B cell (primary cell): ENCODE measurements at regions of chr16 and their contacts with region 1.

Region 1: GRCh38 chr16:29961479-29962343 is at the start of gene TMEM219:
- DNase-seq: peak; percentile 97
- ATAC-seq: peak; percentile 92
- H3K4me3 ChIP-seq: peak within 1 kb of the TSS; percentile 76 to 86 (median 84)
- H3K4me3 Mint-ChIP-seq: peak within 1 kb of the TSS; percentile 90
- H3K27ac ChIP-seq: peak within 1 kb of the TSS; percentile 79 to 88
- H3K27ac Mint-ChIP-seq: peak within 1 kb of the TSS; percentile 91
- H3K4me1 ChIP-seq: peaks cover 13 to 19% of the 10 kb centered on the region in 2 donors
- H3K4me1 Mint-ChIP-seq: peaks cover 20% of the 10 kb centered on the region
- H3K27me3 ChIP-seq: no peaks in the 10 kb centered on the region
- H3K27me3 Mint-ChIP-seq: no peaks in the 10 kb centered on the region
- CTCF ChIP-seq: peak; percentile 65
- total RNA-seq, gene TMEM219: 56.3 and 66.6 TPM in 2 replicates

Region 2: DNA sequence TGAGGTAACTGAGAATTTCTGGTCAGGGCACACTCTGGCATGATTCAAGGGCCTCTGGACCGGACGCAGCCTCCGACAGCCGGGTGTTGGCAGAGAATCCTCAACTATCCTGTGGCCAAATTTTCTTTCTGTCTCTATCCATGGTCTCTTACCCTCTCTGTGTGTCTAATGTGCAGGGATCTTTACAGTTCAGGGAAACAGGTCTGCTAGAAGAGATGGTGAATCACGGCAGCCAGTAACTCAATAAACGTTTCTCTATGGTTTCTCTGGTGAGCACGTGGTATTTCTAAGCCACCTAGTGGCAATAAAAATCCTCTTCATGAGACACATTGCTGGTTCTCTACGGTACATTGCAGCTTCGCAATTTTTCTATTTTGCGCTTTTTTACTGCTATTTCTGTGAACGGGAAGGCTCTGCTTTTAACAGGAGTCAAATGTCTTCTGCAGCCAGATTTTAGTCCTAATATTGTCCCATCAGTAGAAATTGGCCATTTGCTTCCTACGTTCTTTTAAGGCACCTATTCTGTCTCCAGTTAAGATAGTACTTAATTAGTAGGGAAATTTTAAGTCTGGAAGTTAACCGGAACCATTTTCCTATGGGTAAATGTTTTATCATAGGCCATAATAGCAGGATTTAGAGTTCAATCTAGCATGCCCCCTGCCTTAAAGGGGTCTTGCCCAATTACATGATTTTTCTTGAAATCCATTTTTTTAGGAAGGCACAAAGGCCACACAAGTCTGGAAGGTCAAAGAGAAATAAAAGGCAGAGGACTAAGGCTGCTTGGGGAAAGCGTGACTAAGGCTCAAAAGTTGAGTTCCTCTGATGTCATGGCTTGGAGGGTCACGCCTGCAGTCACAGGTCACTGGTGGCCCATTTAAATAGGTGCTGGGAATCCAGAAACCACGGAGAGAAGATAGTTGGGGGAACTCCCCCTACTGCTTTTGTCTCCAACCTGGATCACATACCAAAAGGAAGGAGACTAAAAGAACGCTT is 251.2 kb before region 1 on chr16:
- CTCF ChIA-PET with region 1: no interaction called
- POLR2A ChIA-PET with region 1: no interaction called
- intact Hi-C with region 1: no loop called
- DNase-seq: peak; percentile 77
- ATAC-seq: peak; percentile 88
- H3K4me3 ChIP-seq: peak overlapping the region in 1 of 5 experiments; percentile 29
- H3K4me3 Mint-ChIP-seq: peak overlapping the region; percentile 17
- H3K27ac ChIP-seq: no peak overlapping the region
- H3K27ac Mint-ChIP-seq: no peak overlapping the region
- H3K4me1 ChIP-seq: peaks cover 19 to 21% of the 10 kb centered on the region in 2 donors
- H3K4me1 Mint-ChIP-seq: peaks cover 20% of the 10 kb centered on the region
- H3K27me3 ChIP-seq: no peaks in the 10 kb centered on the region
- H3K27me3 Mint-ChIP-seq: peaks cover 8% of the 10 kb centered on the region
- CTCF ChIP-seq: peak; percentile 76

Region 3: DNA sequence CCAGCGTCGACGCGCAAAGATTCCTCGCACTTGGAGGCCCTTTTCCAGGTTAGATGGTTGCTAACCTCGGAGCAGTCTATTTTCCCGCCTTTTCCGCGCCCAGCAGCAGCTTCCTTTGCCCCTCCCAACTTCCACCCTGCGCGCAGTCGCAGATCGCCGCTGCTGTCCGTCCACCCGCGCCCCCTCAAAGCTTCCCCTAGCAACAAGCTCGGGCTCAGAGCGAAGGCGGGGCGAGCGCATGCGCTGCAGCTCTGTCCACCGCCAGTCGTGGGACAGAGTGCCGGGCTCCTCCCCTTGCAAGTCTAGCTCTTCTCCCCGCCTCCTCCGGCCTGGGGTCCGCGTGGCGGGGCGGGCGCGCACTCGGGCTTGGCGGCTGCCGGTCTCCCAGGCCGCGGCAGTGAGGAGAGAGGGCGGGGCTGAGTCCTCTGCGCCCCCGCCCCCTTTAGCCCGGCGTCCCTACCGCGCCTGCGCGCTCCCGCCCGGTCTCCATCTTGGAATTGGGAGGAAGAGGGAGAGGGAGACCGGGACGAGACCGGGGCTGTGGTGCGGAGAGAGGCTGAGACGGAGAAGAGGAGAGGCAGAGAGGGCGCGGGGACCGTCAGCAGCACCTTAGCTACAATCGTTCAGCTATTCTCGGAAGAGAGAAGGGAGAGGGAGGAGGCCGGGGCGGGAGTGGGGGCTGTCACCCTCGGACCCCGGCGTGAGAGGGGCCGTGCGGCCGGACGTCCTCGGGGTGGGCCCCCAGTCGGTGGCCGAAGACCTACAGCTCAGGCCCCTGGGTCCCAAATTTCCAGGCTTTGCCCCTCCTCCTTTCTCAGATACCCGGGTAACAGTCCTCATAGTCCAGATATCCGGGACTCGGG is 11.9 kb after region 1 on chr16 and contains the start of gene TAOK2:
- CTCF ChIA-PET with region 1: interaction called, 14 read pairs
- POLR2A ChIA-PET with region 1: interaction called, 16 read pairs
- intact Hi-C with region 1: loop called (anchors 1 kb)
- DNase-seq: peak; percentile 98
- ATAC-seq: peak; percentile 99
- H3K4me3 ChIP-seq: peak within 1 kb of the TSS; percentile 79 to 100 (median 99)
- H3K4me3 Mint-ChIP-seq: peak within 1 kb of the TSS; percentile 95
- H3K27ac ChIP-seq: peak within 1 kb of the TSS; percentile 73 to 79
- H3K27ac Mint-ChIP-seq: peak within 1 kb of the TSS; percentile 94
- H3K4me1 ChIP-seq: peaks cover 31 to 38% of the 10 kb centered on the region in 2 donors
- H3K4me1 Mint-ChIP-seq: peaks cover 36% of the 10 kb centered on the region
- H3K27me3 ChIP-seq: no peaks in the 10 kb centered on the region
- H3K27me3 Mint-ChIP-seq: no peaks in the 10 kb centered on the region
- CTCF ChIP-seq: no peak
- total RNA-seq, gene TAOK2: 50.8 and 51.9 TPM in 2 replicates

Region 4: DNA sequence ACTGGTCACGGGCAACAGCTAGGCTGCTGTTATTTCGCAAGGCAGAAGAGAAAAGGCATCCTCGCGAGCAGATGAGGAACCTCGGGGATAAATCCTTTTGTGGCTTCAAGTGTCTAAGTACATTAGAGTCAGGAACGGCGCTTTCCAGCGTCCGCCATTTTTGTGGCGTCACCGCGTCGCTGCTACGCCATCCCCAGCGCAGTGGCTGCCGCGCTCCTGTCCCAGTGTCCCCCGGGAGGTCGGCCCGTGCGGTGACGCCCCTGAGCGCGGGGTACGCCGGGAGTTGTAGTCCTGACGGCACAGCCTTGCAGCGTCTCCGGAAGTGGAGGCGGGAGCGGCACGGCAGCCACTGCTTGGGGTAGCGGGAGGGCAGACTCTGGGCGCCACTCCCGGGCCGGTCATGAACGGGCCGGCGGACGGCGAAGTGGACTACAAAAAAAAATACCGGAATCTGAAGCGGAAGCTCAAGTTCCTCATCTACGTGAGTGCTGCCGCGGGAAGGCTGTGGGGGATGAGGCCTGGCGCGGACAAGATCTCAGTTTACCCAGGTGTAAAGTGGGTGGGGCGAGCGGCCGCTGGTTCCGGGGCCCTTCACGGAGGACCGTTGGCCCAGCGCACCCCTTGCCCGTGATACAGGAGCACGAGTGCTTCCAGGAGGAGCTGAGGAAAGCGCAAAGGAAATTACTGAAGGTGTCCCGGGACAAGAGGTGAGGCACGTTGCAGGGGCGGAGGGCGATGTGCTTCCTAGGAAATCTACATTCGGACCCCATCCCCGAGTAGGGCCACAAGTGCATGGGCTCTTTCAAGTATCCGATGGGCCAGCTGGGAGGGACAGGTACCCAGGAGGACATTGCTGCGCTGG is 34.4 kb after region 1 on chr16 and contains the start of gene INO80E:
- CTCF ChIA-PET with region 1: no interaction called
- POLR2A ChIA-PET with region 1: no interaction called
- intact Hi-C with region 1: loop called (anchors 1 kb)
- DNase-seq: peak; percentile 97
- ATAC-seq: peak; percentile 96
- H3K4me3 ChIP-seq: peak within 1 kb of the TSS; percentile 89 to 100 (median 98)
- H3K4me3 Mint-ChIP-seq: peak within 1 kb of the TSS; percentile 98
- H3K27ac ChIP-seq: peak within 1 kb of the TSS; percentile 94 to 97
- H3K27ac Mint-ChIP-seq: peak within 1 kb of the TSS; percentile 94
- H3K4me1 ChIP-seq: peaks cover 15 to 22% of the 10 kb centered on the region in 2 donors
- H3K4me1 Mint-ChIP-seq: peaks cover 43% of the 10 kb centered on the region
- H3K27me3 ChIP-seq: no peaks in the 10 kb centered on the region
- H3K27me3 Mint-ChIP-seq: no peaks in the 10 kb centered on the region
- CTCF ChIP-seq: no peak
- total RNA-seq, gene INO80E: 113 and 119 TPM in 2 replicates